Colonic mucosa (tissue), 4 donors: ENCODE measurements at regions of chr19 and their contacts with region 1.

Region 1: GRCh38 chr19:46840136-46840942 is 10.3 kb downstream of the AP2S1 start:
- DNase-seq: no peak
- H3K4me3 ChIP-seq: no peak overlapping the region
- H3K27ac ChIP-seq: peak overlapping the region; percentile 60
- H3K4me1 ChIP-seq: peaks cover 6% of the 10 kb centered on the region
- H3K27me3 ChIP-seq: no peaks in the 10 kb centered on the region
- CTCF ChIP-seq: peak; percentile 80

Region 2: GRCh38 chr19:46753420-46754155 is 86.8 kb before region 1 on chr19:
- intact Hi-C with region 1: loop called (anchors 2 kb)
- DNase-seq: peak; percentile 76
- H3K4me3 ChIP-seq: no peak overlapping the region
- H3K27ac ChIP-seq: no peak overlapping the region
- H3K4me1 ChIP-seq: no peaks in the 10 kb centered on the region
- H3K27me3 ChIP-seq: no peaks in the 10 kb centered on the region
- CTCF ChIP-seq: peak; percentile 27